Activated CD4-positive, alpha-beta T cell treated with anti-CD3 and anti-CD28 coated beads for 36 hours (primary cell): ENCODE measurements at regions of chr21 and their contacts with region 1.

Region 1: DNA sequence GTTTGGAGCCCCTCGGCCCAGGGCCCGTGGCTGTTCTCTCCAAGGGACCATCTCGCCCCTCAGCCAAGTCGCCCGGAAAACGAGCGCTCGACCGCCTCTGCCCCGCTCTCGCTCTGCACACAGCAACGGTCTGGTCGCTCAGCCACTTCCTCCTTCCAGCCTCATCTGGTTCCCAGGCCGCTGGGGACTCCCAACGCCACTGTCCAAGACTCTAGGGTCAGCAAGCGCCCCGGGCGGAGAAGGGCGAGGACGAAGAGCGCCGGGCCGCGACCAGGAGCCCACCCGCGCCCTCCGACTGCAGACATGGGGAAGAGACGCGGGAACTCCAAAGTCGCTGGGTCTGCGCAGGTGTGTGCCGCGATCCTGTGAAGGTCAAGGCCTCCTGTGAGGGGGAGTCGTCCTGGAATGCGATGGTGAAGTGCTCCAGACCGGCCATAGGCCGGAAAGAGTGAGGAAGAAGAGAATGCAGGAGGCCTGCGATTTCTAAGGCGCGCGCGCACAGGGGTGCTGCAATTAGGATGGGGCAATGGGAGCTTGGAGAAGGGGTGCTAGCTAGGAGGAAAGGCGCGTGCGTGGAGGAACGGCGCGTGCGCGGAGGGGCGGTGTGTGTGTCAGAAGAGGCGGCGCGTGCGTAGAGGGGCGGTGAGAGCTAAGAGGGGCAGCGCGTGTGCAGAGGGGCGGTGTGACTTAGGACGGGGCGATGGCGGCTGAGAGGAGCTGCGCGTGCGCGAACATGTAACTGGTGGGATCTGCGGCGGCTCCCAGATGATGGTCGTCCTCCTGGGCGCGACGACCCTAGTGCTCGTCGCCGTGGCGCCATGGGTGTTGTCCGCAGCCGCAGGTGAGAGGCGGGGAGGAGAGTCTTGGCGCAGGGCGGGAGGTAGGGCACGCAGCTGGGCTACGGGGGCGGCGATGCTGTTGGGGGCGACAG is at the start of gene IFNAR1:
- DNase-seq: peak; percentile 100
- ATAC-seq: peak; percentile 95
- H3K4me3 Mint-ChIP-seq: no peak within 1 kb of the TSS
- H3K27ac Mint-ChIP-seq: no peak within 1 kb of the TSS
- H3K4me1 Mint-ChIP-seq: peaks cover 31% of the 10 kb centered on the region
- H3K27me3 Mint-ChIP-seq: no peaks in the 10 kb centered on the region
- total RNA-seq, gene IFNAR1: 21.8 to 29.6 TPM

Region 2: GRCh38 chr21:33205476-33205875 is 119.1 kb before region 1 on chr21:
- CTCF ChIA-PET with region 1: interaction called, 5 read pairs
- POLR2A ChIA-PET with region 1: interaction called, 7 read pairs
- intact Hi-C with region 1: loop called in 1 of 2 experiments (anchors 2 kb)
- DNase-seq: no peak
- ATAC-seq: peak; percentile 7
- H3K4me3 Mint-ChIP-seq: peak overlapping the region; percentile 6
- H3K27ac Mint-ChIP-seq: peak overlapping the region; percentile 90
- H3K4me1 Mint-ChIP-seq: peaks cover 36% of the 10 kb centered on the region
- H3K27me3 Mint-ChIP-seq: no peaks in the 10 kb centered on the region

Region 3: GRCh38 chr21:33266050-33266788 is 58.3 kb before region 1 on chr21 and contains the start of gene IL10RB:
- CTCF ChIA-PET with region 1: interaction called, 14 read pairs
- POLR2A ChIA-PET with region 1: interaction called, 5 read pairs
- intact Hi-C with region 1: loop called (anchors 2 kb)
- DNase-seq: peak; percentile 84
- ATAC-seq: peak; percentile 64
- H3K4me3 Mint-ChIP-seq: peak within 1 kb of the TSS; percentile 90
- H3K27ac Mint-ChIP-seq: peak within 1 kb of the TSS; percentile 92
- H3K4me1 Mint-ChIP-seq: peaks cover 42% of the 10 kb centered on the region
- H3K27me3 Mint-ChIP-seq: no peaks in the 10 kb centered on the region
- total RNA-seq, gene IL10RB: 22.8 to 25.0 TPM

Region 4: GRCh38 chr21:33434770-33435360 is 110.3 kb after region 1 on chr21:
- CTCF ChIA-PET with region 1: no interaction called
- POLR2A ChIA-PET with region 1: no interaction called
- intact Hi-C with region 1: loop called in 1 of 2 experiments (anchors 2 kb)
- DNase-seq: peak; percentile 53
- ATAC-seq: peak; percentile 96
- H3K4me3 Mint-ChIP-seq: peak overlapping the region; percentile 4
- H3K27ac Mint-ChIP-seq: peak overlapping the region; percentile 59
- H3K4me1 Mint-ChIP-seq: peaks cover 26% of the 10 kb centered on the region
- H3K27me3 Mint-ChIP-seq: no peaks in the 10 kb centered on the region

Region 5: DNA sequence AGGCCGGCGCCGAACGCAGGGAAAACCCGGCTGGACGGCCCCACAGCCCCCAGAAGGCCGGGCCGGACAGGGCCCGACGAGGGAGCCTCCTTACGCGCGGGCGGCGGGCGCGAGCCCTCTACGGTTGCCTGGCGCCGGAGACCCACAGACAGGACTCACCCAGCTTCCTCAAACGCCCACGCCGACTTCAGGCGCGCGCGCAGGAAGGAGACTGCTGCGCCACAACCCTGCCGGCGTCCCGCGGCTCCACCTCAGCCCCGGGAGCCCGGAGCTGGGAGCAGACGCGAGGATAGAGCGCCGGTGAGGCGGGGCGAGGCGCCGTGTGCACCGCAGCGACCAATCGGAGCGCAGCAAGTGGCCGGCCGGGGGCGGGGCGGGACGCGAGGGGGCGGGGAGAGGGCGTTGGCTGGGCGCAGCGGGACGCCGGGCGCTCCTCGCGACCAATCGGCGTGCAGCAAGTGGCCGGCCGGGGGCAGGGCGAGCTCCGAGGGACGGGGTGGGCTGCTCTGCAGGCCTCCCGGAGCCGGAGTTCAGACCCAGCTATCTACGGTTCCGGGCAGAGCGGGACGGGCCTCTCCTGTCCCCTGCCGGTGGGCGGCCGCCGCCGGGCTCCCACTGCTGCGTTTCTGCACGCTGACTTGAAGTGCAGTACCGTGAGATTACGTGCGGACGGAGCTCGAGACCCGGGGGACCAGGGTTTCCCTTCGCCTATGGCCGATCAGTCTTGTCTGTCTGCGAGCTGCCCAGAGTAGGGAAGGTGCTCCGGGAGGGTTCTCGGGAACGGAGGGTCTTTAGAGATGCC is 155.3 kb after region 1 on chr21 and contains the start of gene TMEM50B:
- CTCF ChIA-PET with region 1: interaction called, 4 read pairs
- POLR2A ChIA-PET with region 1: interaction called, 8 read pairs
- intact Hi-C with region 1: loop called in 1 of 2 experiments (anchors 1 kb)
- DNase-seq: peak; percentile 99
- ATAC-seq: peak; percentile 97
- H3K4me3 Mint-ChIP-seq: peak within 1 kb of the TSS; percentile 83
- H3K27ac Mint-ChIP-seq: peak within 1 kb of the TSS; percentile 88
- H3K4me1 Mint-ChIP-seq: peaks cover 17% of the 10 kb centered on the region
- H3K27me3 Mint-ChIP-seq: no peaks in the 10 kb centered on the region
- total RNA-seq, gene TMEM50B: 13.6 to 15.2 TPM

Region 6: DNA sequence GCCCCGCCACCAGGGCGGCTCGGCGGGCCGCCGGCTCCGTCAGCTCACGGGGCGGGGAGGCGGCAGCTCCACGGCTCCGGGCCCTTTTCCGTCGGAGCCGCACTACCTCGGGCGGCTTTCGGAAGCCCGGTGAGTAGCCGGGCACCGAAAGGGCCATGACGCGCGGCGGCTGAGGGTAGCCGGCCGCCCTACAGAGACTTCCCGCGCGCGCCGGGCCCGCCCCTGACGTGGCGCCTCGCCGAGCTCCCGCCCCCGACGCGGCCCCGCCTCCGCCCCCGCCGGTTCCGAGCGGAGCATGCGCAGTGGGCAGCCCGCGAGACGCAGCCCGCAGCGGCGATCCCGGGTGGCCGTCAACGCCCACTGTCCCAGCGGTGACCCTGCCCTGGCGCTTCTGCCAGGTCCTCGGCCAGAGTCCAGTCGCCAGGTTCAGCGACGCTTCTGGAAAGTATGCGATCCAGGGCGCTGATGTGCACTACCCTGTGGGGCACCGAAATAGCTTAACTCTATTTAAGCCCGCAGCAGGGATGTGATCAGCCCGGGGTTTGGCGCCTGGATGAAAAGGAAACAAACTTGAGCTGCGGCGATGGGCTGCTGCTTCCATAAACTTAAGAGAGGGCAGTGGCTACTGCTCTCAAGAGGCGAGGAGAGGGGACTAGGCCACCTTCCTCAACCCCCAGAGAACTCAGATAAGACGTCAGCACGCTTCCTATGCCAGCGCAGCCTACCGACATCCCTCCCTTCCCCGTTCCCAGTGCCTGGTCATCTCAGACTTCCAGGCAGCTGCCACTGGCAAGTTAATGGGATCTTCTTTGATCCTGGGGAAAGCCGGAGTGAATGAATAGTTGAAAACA is 264.2 kb after region 1 on chr21 and contains the start of gene DONSON:
- CTCF ChIA-PET with region 1: no interaction called
- POLR2A ChIA-PET with region 1: no interaction called
- intact Hi-C with region 1: loop called in 1 of 2 experiments (anchors 1 kb)
- DNase-seq: peak; percentile 93
- ATAC-seq: peak; percentile 92
- H3K4me3 Mint-ChIP-seq: peak within 1 kb of the TSS; percentile 91
- H3K27ac Mint-ChIP-seq: peak within 1 kb of the TSS; percentile 87
- H3K4me1 Mint-ChIP-seq: peaks cover 19% of the 10 kb centered on the region
- H3K27me3 Mint-ChIP-seq: no peaks in the 10 kb centered on the region
- total RNA-seq, gene DONSON: 39.5 to 41.8 TPM

Region 7: GRCh38 chr21:34202553-34203372 is 878.2 kb after region 1 on chr21:
- CTCF ChIA-PET with region 1: no interaction called
- POLR2A ChIA-PET with region 1: no interaction called
- intact Hi-C with region 1: no loop called
- DNase-seq: no peak
- ATAC-seq: no peak
- H3K4me3 Mint-ChIP-seq: peak overlapping the region; percentile 70
- H3K27ac Mint-ChIP-seq: no peak overlapping the region
- H3K4me1 Mint-ChIP-seq: peaks cover 40% of the 10 kb centered on the region
- H3K27me3 Mint-ChIP-seq: peaks cover 3% of the 10 kb centered on the region